Left lung (tissue), 14 donors: ENCODE measurements at regions of chr10 and their contacts with region 1.

Region 1: DNA sequence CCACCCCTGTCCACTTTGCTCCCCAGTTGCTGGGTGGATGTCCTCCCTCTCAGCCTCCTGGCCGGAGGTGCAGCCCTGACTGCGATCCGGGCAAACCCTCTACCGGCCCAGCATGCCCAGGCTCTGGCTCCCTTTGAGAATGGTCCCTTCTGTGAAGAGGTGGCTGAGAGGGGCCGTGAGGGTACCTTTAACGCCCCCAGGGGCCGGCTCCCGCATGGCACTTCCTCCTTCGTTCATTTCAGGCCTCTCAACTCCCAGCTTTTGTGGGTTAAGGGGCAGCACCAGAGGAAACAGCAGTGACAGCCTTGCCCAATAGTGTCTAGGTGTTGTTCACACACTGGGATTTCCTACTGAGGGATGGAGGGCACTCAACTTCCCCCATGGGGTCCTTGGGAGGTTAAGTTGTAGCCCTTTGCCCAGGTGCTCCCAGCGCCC is 33.2 kb upstream of the HABP2 start:
- DNase-seq: no peak
- ATAC-seq: no peak
- H3K4me3 ChIP-seq: no peak overlapping the region
- H3K27ac ChIP-seq: no peak overlapping the region
- H3K4me1 ChIP-seq: no peaks in the 10 kb centered on the region
- H3K27me3 ChIP-seq: no peaks in the 10 kb centered on the region
- CTCF ChIP-seq: no peak

Region 2: DNA sequence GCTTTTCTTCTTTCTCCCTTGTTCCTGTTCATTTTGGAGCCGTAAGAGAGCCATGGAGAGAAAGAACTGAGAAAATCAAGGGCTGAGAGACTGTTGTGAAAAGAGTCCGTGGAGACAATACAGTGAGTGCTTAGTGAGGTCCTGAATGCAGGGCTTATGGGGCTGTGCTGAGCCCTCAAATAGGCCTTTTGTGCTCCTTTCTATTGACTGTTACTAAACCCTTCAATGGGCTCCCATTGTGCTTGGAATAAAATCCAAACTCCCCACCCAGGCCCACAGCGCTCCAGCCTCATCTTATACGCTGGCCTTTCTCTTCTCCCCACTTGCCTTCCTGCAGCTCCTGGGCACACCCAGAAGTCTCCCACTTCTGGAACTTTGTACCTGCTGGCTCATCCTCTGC is 209.9 kb before region 1 on chr10:
- intact Hi-C with region 1: no loop called
- DNase-seq: no peak
- ATAC-seq: no peak
- H3K4me3 ChIP-seq: no peak overlapping the region
- H3K27ac ChIP-seq: no peak overlapping the region
- H3K4me1 ChIP-seq: no peaks in the 10 kb centered on the region
- H3K27me3 ChIP-seq: no peaks in the 10 kb centered on the region
- CTCF ChIP-seq: no peak

Region 3: GRCh38 chr10:113399065-113399464 is 120.6 kb before region 1 on chr10:
- intact Hi-C with region 1: loop called in 1 of 2 experiments (anchors 10 kb)
- DNase-seq: no peak
- ATAC-seq: no peak
- H3K4me3 ChIP-seq: no peak overlapping the region
- H3K27ac ChIP-seq: no peak overlapping the region
- H3K4me1 ChIP-seq: no peaks in the 10 kb centered on the region
- H3K27me3 ChIP-seq: no peaks in the 10 kb centered on the region
- CTCF ChIP-seq: no peak

Region 4: DNA sequence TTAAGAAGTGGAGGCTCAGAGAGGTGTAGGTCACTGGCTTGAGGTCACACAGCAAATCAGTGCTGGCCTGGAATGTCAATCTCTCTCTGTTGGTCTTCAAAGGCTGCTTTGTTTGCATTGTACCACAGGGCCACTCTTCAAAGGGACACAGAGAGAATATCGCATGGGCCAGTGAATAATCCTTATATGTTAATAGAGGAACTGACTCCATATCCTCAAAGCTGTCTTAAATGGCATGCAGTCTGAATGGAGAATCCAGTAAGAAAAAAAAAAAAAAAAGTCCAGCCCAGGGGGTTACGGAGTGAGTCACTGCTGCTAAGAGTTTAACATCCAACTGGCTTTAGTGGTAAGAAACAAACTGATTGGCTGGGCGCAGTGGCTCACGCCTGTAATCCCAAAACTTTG is 90.0 kb after region 1 on chr10:
- intact Hi-C with region 1: no loop called
- DNase-seq: no peak
- ATAC-seq: no peak
- H3K4me3 ChIP-seq: no peak overlapping the region
- H3K27ac ChIP-seq: no peak overlapping the region
- H3K4me1 ChIP-seq: no peaks in the 10 kb centered on the region
- H3K27me3 ChIP-seq: peaks cover 0 to 33% of the 10 kb centered on the region in 2 donors
- CTCF ChIP-seq: no peak